ENCODE measurements at regions of chr19 and their contacts with region 1.

Region 1: GRCh38 chr19:50537762-50538230 is 24.1 kb upstream of the ASPDH start:
- DNase-seq: peak; percentile 79
- ATAC-seq: peak; percentile 97
- H3K4me3 ChIP-seq: no peak overlapping the region
- H3K27ac ChIP-seq: no peak overlapping the region
- H3K4me1 ChIP-seq: no peaks in the 10 kb centered on the region
- H3K27me3 ChIP-seq: no peaks in the 10 kb centered on the region
- CTCF ChIP-seq: peak; percentile 93 to 98 (median 95)
- POLR2A ChIP-seq: no peak
- RAD21 ChIP-seq: peak; percentile 88

Region 2: GRCh38 chr19:50401605-50402450 is 136.0 kb before region 1 on chr19:
- CTCF ChIA-PET with region 1: no interaction called
- POLR2A ChIA-PET with region 1: no interaction called
- RAD21 ChIA-PET with region 1: no interaction called
- intact Hi-C with region 1: no loop called
- DNase-seq: no peak
- ATAC-seq: no peak
- H3K4me3 ChIP-seq: no peak overlapping the region
- H3K27ac ChIP-seq: no peak overlapping the region; the same call in 1 of the 2 replicates
- H3K4me1 ChIP-seq: no peaks in the 10 kb centered on the region
- H3K27me3 ChIP-seq: no peaks in the 10 kb centered on the region
- CTCF ChIP-seq: peak in 1 of 3 experiments; percentile 17; a peak in 1 of 6 replicates
- POLR2A ChIP-seq: no peak
- RAD21 ChIP-seq: no peak

Region 3: DNA sequence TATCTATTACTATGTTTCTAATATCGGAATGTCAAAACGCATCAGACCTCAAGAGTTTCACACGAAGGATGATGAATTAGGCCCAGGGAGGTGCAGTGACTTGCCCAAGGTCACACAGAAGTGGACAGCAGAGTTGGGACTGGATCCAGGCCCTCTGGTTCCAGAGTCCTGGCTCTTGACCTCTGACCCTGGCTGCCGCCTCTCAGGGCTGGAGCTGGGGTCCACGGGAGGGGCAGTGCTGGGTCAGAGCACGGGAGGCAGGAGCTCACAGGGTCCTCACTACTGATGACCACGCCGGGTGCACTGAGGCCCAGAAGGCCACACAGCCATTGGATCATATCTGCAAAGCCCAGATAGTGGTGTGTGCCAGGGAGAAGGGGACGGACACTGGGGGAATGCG is 14.9 kb before region 1 on chr19:
- CTCF ChIA-PET with region 1: interaction called, 11 read pairs
- POLR2A ChIA-PET with region 1: no interaction called
- RAD21 ChIA-PET with region 1: interaction called in 1 of 2 experiments, 3 read pairs
- intact Hi-C with region 1: no loop called
- DNase-seq: no peak
- ATAC-seq: no peak
- H3K4me3 ChIP-seq: no peak overlapping the region
- H3K27ac ChIP-seq: no peak overlapping the region
- H3K4me1 ChIP-seq: no peaks in the 10 kb centered on the region
- H3K27me3 ChIP-seq: no peaks in the 10 kb centered on the region
- CTCF ChIP-seq: no peak
- POLR2A ChIP-seq: no peak
- RAD21 ChIP-seq: no peak

Region 4: GRCh38 chr19:50657712-50658440 is 120.1 kb after region 1 on chr19:
- CTCF ChIA-PET with region 1: no interaction called
- POLR2A ChIA-PET with region 1: no interaction called
- RAD21 ChIA-PET with region 1: no interaction called
- intact Hi-C with region 1: loop called (anchors 10 kb)
- DNase-seq: peak; percentile 99
- ATAC-seq: peak; percentile 95
- H3K4me3 ChIP-seq: peak overlapping the region; percentile 77 to 81
- H3K27ac ChIP-seq: peak overlapping the region; percentile 81
- H3K4me1 ChIP-seq: peaks cover 0 to 34% of the 10 kb centered on the region in 2 experiments; a peak in 3 of 4 replicates
- H3K27me3 ChIP-seq: no peaks in the 10 kb centered on the region
- CTCF ChIP-seq: no peak
- POLR2A ChIP-seq: peak; percentile 47
- RAD21 ChIP-seq: no peak

Region 5: DNA sequence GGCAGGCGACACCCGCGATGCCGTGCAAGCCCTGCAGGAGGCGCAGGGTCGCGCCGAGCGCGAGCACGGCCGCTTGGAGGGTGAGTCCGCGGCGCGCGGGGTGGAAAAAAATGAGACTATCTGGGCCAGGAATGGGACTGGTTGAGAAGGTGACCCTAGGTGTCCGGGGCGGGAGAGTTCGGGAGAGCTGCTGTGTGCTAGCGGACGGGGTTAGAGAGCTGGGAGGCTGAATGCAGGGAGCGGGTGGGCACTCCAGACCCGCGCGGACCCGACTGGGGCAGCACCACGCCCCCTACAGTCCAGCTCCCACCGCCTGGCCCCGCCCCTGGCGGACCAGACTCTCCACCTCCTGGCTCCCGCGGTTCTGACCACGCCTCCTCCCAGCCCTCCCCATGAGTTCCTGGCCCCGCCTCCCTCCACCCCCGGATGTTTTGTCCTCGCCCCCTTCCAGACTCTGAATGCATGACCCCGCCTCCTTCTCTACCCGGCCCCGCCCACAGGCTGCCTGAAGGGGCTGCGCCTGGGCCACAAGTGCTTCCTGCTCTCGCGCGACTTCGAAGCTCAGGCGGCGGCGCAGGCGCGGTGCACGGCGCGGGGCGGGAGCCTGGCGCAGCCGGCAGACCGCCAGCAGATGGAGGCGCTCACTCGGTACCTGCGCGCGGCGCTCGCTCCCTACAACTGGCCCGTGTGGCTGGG is 186.9 kb after region 1 on chr19:
- CTCF ChIA-PET with region 1: interaction called, 11 read pairs
- POLR2A ChIA-PET with region 1: no interaction called
- RAD21 ChIA-PET with region 1: no interaction called
- intact Hi-C with region 1: no loop called
- DNase-seq: peak; percentile 99
- ATAC-seq: peak; percentile 89
- H3K4me3 ChIP-seq: peak overlapping the region; percentile 89 to 93
- H3K27ac ChIP-seq: peak overlapping the region; percentile 75
- H3K4me1 ChIP-seq: peaks cover 18 to 41% of the 10 kb centered on the region in 2 experiments; a peak in 3 of 4 replicates
- H3K27me3 ChIP-seq: no peaks in the 10 kb centered on the region
- CTCF ChIP-seq: peak; percentile 82 to 98 (median 91)
- POLR2A ChIP-seq: peak; percentile 62
- RAD21 ChIP-seq: peak; percentile 51

Measured in HCT116 (cell line).